GM12878 (cell line): ENCODE measurements at regions of chr6 and their contacts with region 1.

Region 1: DNA sequence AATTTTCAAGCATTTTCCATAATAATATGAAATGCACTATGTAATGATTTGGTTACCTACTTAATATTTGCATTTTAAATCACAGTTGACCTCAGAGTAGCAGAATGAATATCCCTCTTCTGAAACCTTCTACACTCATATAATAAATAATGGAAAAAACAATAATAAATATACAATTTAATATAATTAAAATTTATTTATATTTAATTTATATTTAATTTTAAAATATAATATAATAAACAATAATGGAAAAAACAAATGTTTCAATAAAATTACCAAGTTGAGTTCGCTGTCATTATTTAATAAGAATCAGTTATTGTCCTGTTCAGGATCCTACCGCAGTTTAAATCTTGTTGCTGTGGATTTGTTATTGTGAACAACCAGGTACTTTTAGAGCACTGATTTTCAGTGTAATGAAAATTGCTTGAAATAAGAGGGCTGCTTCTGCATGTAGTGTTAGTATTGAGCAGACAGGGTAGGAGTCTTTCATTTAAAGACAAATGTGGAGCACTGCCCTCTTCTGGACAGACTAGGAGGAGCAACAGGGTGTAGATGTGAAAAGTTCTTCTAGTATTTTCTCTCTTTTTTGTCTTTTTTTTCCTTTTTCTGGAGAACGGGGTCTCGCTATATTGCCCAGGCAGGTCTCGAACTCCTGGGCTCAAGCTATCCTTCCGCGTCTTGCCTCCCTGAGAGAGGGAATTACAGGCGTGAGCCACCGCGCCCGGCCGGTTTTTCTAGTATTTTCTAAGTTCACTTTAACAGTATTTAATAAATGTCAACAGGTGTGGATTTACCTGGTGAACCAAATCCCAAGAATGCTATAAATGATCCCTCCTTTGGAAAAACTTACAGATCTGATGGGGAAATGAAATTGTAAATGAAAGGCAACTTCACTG is 13.6 kb downstream of the TRAPPC3L start:
- DNase-seq: no peak
- ATAC-seq: peak; percentile 89
- H3K4me3 ChIP-seq: no peak overlapping the region
- H3K27ac ChIP-seq: no peak overlapping the region
- H3K4me1 ChIP-seq: no peaks in the 10 kb centered on the region
- H3K27me3 ChIP-seq: peaks cover 2 to 3% of the 10 kb centered on the region in 2 experiments; a peak in 2 of 4 replicates
- CTCF ChIP-seq: peak; percentile 69 to 71 (median 69)
- EP300 ChIP-seq: no peak
- POLR2A ChIP-seq: no peak
- RAD21 ChIP-seq: peak; percentile 81

Region 2: GRCh38 chr6:116268589-116269293 is 263.2 kb before region 1 on chr6:
- CTCF ChIA-PET with region 1: interaction called, 64 read pairs
- POLR2A ChIA-PET with region 1: no interaction called
- RAD21 ChIA-PET with region 1: interaction called, 16 read pairs
- SMC1A ChIA-PET with region 1: interaction called, 42 read pairs
- in situ Hi-C with region 1: no loop called
- intact Hi-C with region 1: loop called (anchors 1 kb)
- DNase-seq: no peak
- ATAC-seq: peak; percentile 86
- H3K4me3 ChIP-seq: no peak overlapping the region
- H3K27ac ChIP-seq: no peak overlapping the region
- H3K4me1 ChIP-seq: no peaks in the 10 kb centered on the region
- H3K27me3 ChIP-seq: no peaks in the 10 kb centered on the region
- CTCF ChIP-seq: peak; percentile 70 to 97 (median 74); a peak in 5 of 6 replicates
- EP300 ChIP-seq: no peak
- POLR2A ChIP-seq: no peak
- RAD21 ChIP-seq: peak; percentile 83

Region 3: GRCh38 chr6:116444092-116444491 is 87.8 kb before region 1 on chr6:
- CTCF ChIA-PET with region 1: interaction called, 10 read pairs
- POLR2A ChIA-PET with region 1: no interaction called
- RAD21 ChIA-PET with region 1: interaction called, 3 read pairs
- SMC1A ChIA-PET with region 1: interaction called, 15 read pairs
- in situ Hi-C with region 1: no loop called
- intact Hi-C with region 1: loop called (anchors 2 kb)
- DNase-seq: no peak
- ATAC-seq: peak; percentile 87
- H3K4me3 ChIP-seq: no peak overlapping the region
- H3K27ac ChIP-seq: no peak overlapping the region
- H3K4me1 ChIP-seq: no peaks in the 10 kb centered on the region
- H3K27me3 ChIP-seq: no peaks in the 10 kb centered on the region
- CTCF ChIP-seq: peak; percentile 59 to 68 (median 65)
- EP300 ChIP-seq: no peak
- POLR2A ChIP-seq: no peak
- RAD21 ChIP-seq: peak; percentile 59

Region 4: DNA sequence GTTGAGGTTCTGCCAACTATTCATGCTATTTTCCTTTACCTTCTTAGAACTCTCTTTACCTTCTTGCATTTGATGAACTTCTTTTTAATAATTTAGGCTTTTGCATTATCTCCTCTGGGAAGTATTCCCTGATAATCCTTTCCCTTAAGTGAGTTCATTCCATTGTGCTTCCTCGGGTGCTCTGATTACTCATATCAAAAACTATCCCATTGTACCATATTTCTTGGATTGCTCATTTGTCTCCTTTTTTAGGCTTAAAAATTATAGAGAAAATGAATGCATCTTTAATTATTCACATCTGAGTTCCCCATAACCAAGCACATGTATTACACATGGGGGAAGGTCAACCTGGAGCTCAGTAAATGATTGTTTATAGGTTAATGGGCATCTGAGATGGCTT is 24.1 kb after region 1 on chr6:
- CTCF ChIA-PET with region 1: interaction called, 48 read pairs
- POLR2A ChIA-PET with region 1: no interaction called
- RAD21 ChIA-PET with region 1: interaction called, 6 read pairs
- SMC1A ChIA-PET with region 1: interaction called, 6 read pairs
- in situ Hi-C with region 1: no loop called
- intact Hi-C with region 1: loop called (anchors 1 kb)
- DNase-seq: no peak
- ATAC-seq: no peak
- H3K4me3 ChIP-seq: no peak overlapping the region
- H3K27ac ChIP-seq: no peak overlapping the region
- H3K4me1 ChIP-seq: no peaks in the 10 kb centered on the region
- H3K27me3 ChIP-seq: no peaks in the 10 kb centered on the region
- CTCF ChIP-seq: no peak
- EP300 ChIP-seq: no peak
- POLR2A ChIP-seq: no peak
- RAD21 ChIP-seq: no peak

Region 5: DNA sequence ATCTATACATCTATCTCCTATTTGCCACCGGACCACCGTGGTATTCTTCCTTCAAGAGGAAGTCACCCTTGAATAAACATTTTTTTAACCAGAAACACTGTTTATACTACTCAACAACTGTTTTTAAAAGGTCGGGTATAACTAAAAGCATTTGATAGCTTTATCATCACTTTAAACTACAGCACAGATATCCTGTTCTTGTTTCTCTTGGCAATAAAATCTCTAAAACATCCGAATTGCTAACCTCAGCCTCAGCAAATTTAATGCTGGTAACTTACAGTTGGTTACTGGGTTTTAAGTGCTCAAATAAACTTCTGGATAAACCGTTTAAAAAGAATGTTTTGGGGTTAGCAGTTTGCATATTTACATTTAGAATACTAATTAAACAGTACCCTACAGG is 116.2 kb after region 1 on chr6:
- CTCF ChIA-PET with region 1: interaction called, 11 read pairs
- POLR2A ChIA-PET with region 1: no interaction called
- RAD21 ChIA-PET with region 1: no interaction called
- SMC1A ChIA-PET with region 1: interaction called, 5 read pairs
- in situ Hi-C with region 1: no loop called
- intact Hi-C with region 1: loop called (anchors 1 kb)
- DNase-seq: no peak
- ATAC-seq: no peak
- H3K4me3 ChIP-seq: no peak overlapping the region
- H3K27ac ChIP-seq: no peak overlapping the region
- H3K4me1 ChIP-seq: no peaks in the 10 kb centered on the region
- H3K27me3 ChIP-seq: no peaks in the 10 kb centered on the region
- CTCF ChIP-seq: no peak
- EP300 ChIP-seq: no peak
- POLR2A ChIP-seq: no peak
- RAD21 ChIP-seq: no peak